Panc1 (cell line): ENCODE measurements at regions of chr12 and their contacts with region 1.

Region 1: DNA sequence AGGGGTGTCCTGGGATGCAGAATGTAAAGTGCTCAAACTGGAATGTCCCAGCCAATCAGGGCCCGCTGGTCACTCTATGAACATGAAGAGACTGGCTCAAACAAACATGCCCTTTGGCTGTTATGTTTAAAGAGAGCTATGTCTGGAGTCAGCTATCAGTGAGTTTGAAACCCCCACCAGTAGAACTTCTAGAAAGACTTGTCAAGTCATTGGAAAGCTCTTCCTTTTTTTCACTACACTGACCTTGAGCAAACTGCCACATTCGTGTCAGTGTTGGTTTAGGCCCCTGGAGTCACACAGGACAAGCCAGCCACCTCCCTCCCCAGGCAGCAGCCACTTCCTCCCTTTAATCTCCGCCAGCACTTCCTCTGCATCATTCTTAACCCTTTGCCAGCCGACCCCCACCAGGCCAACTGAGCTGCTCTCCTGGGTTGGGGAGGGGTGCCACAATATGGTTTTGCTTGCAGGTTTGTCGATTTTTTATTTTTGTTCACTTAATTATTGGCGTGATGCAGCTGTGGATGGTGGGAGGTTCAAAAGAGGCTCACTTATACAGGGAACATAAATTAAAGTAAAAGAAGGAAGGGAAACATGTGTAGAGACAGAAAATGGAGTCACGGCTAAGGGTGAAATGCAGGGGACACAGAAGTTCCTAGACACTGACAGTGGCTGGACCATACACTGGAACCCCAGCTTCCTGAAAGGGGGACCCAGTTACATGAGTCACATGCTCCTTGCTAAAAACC is 25.3 kb downstream of the CMKLR1 start:
- DNase-seq: no peak
- ATAC-seq: 0 out of 2 replicates have a peak, but pooled peaks have one; percentile 10
- H3K4me3 ChIP-seq: no peak overlapping the region
- H3K27ac ChIP-seq: no peak overlapping the region
- H3K4me1 ChIP-seq: no peaks in the 10 kb centered on the region; the same call in 1 of the 2 replicates
- H3K27me3 ChIP-seq: 0 out of 2 replicates have a peak, but pooled peaks cover 2% of the 10 kb centered on the region
- CTCF ChIP-seq: no peak

Region 2: GRCh38 chr12:108241986-108242703 is 71.6 kb before region 1 on chr12:
- CTCF ChIA-PET with region 1: no interaction called
- POLR2A ChIA-PET with region 1: interaction called, 15 read pairs
- in situ Hi-C with region 1: no loop called
- intact Hi-C with region 1: no loop called
- DNase-seq: no peak
- ATAC-seq: 0 out of 2 replicates have a peak, but pooled peaks have one; percentile 42
- H3K4me3 ChIP-seq: no peak overlapping the region
- H3K27ac ChIP-seq: no peak overlapping the region
- H3K4me1 ChIP-seq: no peaks in the 10 kb centered on the region
- H3K27me3 ChIP-seq: peaks cover 2% of the 10 kb centered on the region
- CTCF ChIP-seq: no peak

Region 3: GRCh38 chr12:108457006-108457733 is 143.4 kb after region 1 on chr12:
- CTCF ChIA-PET with region 1: no interaction called
- POLR2A ChIA-PET with region 1: no interaction called
- in situ Hi-C with region 1: no loop called
- intact Hi-C with region 1: no loop called
- DNase-seq: peak; percentile 7
- ATAC-seq: peak; percentile 92
- H3K4me3 ChIP-seq: no peak overlapping the region
- H3K27ac ChIP-seq: no peak overlapping the region
- H3K4me1 ChIP-seq: no peaks in the 10 kb centered on the region
- H3K27me3 ChIP-seq: peaks cover 13% of the 10 kb centered on the region
- CTCF ChIP-seq: peak; percentile 82